CD14-positive monocyte (primary cell): ENCODE measurements at regions of chr1 and their contacts with region 1.

Region 1: GRCh38 chr1:8226747-8227146 is 91.2 kb upstream of the SLC45A1 start:
- DNase-seq: peak in 1 of 3 donors; percentile 36
- H3K4me3 ChIP-seq: no peak overlapping the region
- H3K4me3 Mint-ChIP-seq: no peak overlapping the region
- H3K27ac ChIP-seq: no peak overlapping the region
- H3K27ac Mint-ChIP-seq: peak overlapping the region in 3 of 7 donors; percentile 46 to 68 (median 60)
- H3K4me1 ChIP-seq: peaks cover 31 to 35% of the 10 kb centered on the region in 2 donors
- H3K4me1 Mint-ChIP-seq: peaks cover 34% of the 10 kb centered on the region
- H3K27me3 ChIP-seq: peaks cover 0 to 8% of the 10 kb centered on the region in 2 donors
- H3K27me3 Mint-ChIP-seq: peaks cover 14 to 17% (median 16%) of the 10 kb centered on the region in 3 donors
- CTCF ChIP-seq: no peak

Region 2: GRCh38 chr1:8097077-8097799 is 129.5 kb before region 1 on chr1:
- intact Hi-C with region 1: loop called in 1 of 2 experiments (anchors 5 kb)
- DNase-seq: peak; percentile 75 to 86 (median 84)
- H3K4me3 ChIP-seq: peak overlapping the region in 1 of 3 experiments; percentile 26
- H3K4me3 Mint-ChIP-seq: peak overlapping the region in 1 of 2 donors; percentile 19
- H3K27ac ChIP-seq: peak overlapping the region in 1 of 2 donors; percentile 90
- H3K27ac Mint-ChIP-seq: peak overlapping the region; percentile 87 to 97 (median 93)
- H3K4me1 ChIP-seq: peaks cover 19 to 27% of the 10 kb centered on the region in 2 donors
- H3K4me1 Mint-ChIP-seq: peaks cover 42% of the 10 kb centered on the region
- H3K27me3 ChIP-seq: no peaks in the 10 kb centered on the region
- H3K27me3 Mint-ChIP-seq: peaks cover 0 to 15% (median 3%) of the 10 kb centered on the region in 3 donors
- CTCF ChIP-seq: no peak

Region 3: DNA sequence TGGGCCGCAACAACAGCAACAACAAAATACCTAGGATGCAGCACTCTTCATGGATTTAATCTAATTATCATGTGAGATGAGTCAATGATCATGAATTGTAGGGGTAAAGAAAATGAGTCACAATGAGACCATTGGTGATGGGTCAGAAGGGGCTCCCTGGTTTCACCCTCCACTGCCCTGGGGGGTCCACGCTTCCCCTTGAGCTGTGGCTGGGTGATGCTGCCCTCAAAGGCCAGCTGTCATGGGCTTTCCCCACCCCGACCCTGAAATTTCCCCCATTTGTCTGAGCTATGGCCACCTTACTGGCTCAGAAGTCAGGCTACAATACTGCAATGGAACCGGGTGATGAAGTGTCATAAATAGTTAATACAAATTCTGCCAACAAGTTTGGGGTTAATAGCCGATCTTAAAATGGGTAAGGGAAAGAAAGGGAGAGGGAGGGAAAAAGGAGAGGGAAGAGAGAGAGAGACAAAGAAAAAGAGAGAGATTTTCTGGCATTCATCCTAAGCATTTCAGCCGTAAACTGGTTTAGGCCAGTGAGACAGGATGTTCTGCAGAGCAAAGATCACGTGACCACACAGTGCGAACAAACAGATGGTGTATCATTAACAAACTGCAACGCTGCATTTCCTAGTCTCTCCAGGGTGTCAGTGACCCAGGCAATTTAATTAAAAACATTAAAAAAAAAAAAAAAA is 57.2 kb before region 1 on chr1:
- intact Hi-C with region 1: no loop called
- DNase-seq: peak in 2 of 3 donors; percentile 17 to 30
- H3K4me3 ChIP-seq: no peak overlapping the region
- H3K4me3 Mint-ChIP-seq: peak overlapping the region in 1 of 2 donors; percentile 22
- H3K27ac ChIP-seq: no peak overlapping the region
- H3K27ac Mint-ChIP-seq: peak overlapping the region in 3 of 7 donors; percentile 40 to 87 (median 53)
- H3K4me1 ChIP-seq: peaks cover 2 to 9% of the 10 kb centered on the region in 2 donors
- H3K4me1 Mint-ChIP-seq: peaks cover 11% of the 10 kb centered on the region
- H3K27me3 ChIP-seq: no peaks in the 10 kb centered on the region
- H3K27me3 Mint-ChIP-seq: peaks cover 0 to 7% (median 0%) of the 10 kb centered on the region in 3 donors
- CTCF ChIP-seq: no peak

Region 4: DNA sequence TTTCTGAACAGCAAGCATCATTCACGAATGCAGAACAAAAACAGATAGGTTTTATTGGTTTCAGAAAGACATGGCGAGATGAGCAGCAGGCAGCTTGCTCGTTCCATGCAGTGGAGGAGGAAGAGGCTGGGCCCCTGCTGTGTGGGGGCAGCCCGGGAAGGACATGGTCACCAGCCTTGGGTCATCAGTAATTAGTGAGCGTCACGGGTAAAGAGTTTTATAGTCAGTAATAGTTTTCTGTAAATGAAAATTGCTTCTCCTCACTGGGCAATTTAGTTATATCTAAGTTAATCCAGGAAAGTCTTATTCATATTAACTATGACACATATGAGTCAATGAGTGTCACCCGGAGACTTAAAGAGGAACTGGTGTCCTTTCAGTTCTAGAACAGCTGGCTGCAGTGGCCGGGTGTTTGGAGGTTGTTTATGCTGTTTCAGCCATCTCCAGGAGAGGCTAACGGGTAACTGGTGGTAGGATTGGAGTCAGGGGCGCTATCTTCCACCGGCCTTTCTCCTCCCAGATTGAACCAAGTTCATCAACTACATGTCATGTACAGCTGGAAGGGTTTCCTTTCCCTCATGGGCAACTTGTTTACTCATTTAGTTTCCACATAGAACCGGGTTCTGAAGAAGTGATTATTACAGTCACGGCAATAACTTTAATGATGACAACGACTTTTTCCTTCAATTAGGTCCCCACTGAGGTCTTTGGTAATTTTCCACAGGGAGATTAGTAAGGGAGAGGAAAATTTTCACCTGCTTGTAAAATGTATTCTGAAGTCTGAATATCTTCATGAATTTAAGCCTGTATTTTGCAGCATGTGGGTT is 56.5 kb after region 1 on chr1:
- intact Hi-C with region 1: loop called in 1 of 2 experiments (anchors 10 kb)
- DNase-seq: peak; percentile 52 to 63 (median 61)
- H3K4me3 ChIP-seq: no peak overlapping the region
- H3K4me3 Mint-ChIP-seq: peak overlapping the region in 1 of 2 donors; percentile 77
- H3K27ac ChIP-seq: no peak overlapping the region
- H3K27ac Mint-ChIP-seq: peak overlapping the region in 5 of 7 donors; percentile 5 to 78 (median 42)
- H3K4me1 ChIP-seq: peaks cover 12 to 20% of the 10 kb centered on the region in 2 donors
- H3K4me1 Mint-ChIP-seq: peaks cover 21% of the 10 kb centered on the region
- H3K27me3 ChIP-seq: no peaks in the 10 kb centered on the region
- H3K27me3 Mint-ChIP-seq: peaks cover 13 to 19% (median 18%) of the 10 kb centered on the region in 3 donors
- CTCF ChIP-seq: no peak